H1 (cell line): ENCODE measurements at regions of chr5 and their contacts with region 1.

Region 1: GRCh38 chr5:151924564-151925301 is at the start of gene GLRA1:
- DNase-seq: peak; percentile 41 to 92
- H3K4me3 ChIP-seq: peak within 1 kb of the TSS in 1 of 4 experiments; percentile 46; a peak in 4 of 8 replicates
- H3K27ac ChIP-seq: no peak within 1 kb of the TSS
- H3K4me1 ChIP-seq: peaks cover 0 to 2% (median 0%) of the 10 kb centered on the region in 4 experiments; a peak in 2 of 7 replicates
- H3K27me3 ChIP-seq: peaks cover 4 to 26% (median 11%) of the 10 kb centered on the region in 4 experiments
- CTCF ChIP-seq: no peak
- EP300 ChIP-seq: no peak
- POLR2A ChIP-seq: no peak
- RAD21 ChIP-seq: peak; percentile 11 to 18; a peak in 3 of 4 replicates
- total RNA-seq, gene GLRA1: not detected in 2 replicates

Region 2: GRCh38 chr5:151912360-151912759 is 12.4 kb before region 1 on chr5:
- CTCF ChIA-PET with region 1: interaction called, 22 read pairs
- POLR2A ChIA-PET with region 1: no interaction called
- DNase-seq: no peak
- H3K4me3 ChIP-seq: no peak overlapping the region
- H3K27ac ChIP-seq: no peak overlapping the region
- H3K4me1 ChIP-seq: peaks cover 0 to 2% (median 0%) of the 10 kb centered on the region in 4 experiments; a peak in 1 of 7 replicates
- H3K27me3 ChIP-seq: peaks cover 1 to 31% (median 17%) of the 10 kb centered on the region in 4 experiments
- CTCF ChIP-seq: no peak
- EP300 ChIP-seq: no peak
- POLR2A ChIP-seq: no peak
- RAD21 ChIP-seq: no peak